ENCODE measurements at regions of chr19 and their contacts with region 1.

Region 1: DNA sequence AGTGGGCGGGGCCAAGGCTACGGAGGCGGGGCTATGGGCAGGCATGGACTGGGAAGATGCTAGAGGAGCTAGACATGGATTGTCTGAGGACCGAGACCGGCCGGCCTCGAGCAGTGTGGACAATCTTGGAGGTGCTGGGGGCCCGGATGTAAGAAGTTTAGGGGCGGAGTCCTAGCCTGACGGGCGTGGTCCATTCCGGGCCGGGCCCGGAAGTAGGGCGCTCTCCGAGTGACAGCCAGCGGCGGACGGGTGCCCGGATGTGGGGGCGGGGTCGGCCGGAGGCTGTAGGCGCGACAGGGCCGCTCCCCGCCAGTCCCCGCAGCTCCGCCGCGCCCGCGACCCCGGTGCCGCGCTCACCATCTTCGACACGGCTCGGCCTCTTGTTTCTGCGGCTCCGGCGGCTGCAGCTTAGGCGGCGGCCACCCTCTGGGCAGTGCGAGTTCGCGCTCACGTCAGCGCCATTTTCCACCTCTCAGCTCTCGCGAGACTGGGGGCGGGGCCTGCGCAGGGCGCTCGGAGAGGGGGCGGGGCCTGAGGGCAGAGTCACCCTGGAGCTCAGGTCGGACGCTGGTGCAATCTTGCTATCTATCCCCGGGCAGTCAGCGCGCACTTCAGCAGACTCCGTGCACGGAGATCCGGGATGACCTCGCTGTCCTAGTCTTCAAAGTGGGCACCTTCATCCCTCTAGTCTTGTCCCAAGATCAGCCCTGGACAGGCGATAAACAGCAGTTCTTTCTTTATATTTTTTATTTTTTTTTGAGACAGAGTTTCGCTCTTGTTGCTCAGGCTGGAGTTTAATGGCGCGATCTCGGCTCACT is at the start of gene ZNF414:
- DNase-seq: peak; percentile 91 to 99 (median 97)
- ATAC-seq: peak; percentile 68
- H3K4me3 ChIP-seq: peak within 1 kb of the TSS; percentile 51
- H3K4me3 Mint-ChIP-seq: peak within 1 kb of the TSS; percentile 91
- H3K27ac ChIP-seq: peak within 1 kb of the TSS; percentile 84 to 97
- H3K27ac Mint-ChIP-seq: peak within 1 kb of the TSS; percentile 100
- H3K4me1 ChIP-seq: peaks cover 68% of the 10 kb centered on the region
- H3K4me1 Mint-ChIP-seq: peaks cover 61% of the 10 kb centered on the region
- H3K27me3 ChIP-seq: no peaks in the 10 kb centered on the region
- H3K27me3 Mint-ChIP-seq: no peaks in the 10 kb centered on the region
- CTCF ChIP-seq: no peak
- total RNA-seq, gene ZNF414: 36.3 to 38.0 TPM

Region 2: DNA sequence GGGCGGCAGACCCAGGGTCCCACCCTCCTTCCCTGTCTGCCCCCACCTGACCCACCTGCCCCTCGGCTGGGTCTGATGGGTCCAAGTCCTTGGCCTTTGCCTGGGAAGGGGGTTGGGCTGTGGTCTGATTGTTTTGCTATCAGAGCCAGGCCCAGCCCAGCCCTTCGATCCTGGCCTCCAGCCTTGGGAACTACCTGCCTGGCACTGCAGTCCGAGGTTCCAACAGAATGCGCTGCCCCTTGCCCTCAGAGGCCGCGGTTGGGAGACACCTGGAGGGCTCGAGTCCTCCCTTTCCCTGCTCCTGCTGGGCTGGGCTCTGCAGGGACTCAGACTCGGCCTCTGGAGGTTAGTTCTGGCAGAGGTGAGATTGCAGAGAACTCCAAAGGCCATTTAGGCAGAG is 459.7 kb before region 1 on chr19:
- CTCF ChIA-PET with region 1: no interaction called
- POLR2A ChIA-PET with region 1: no interaction called
- intact Hi-C with region 1: no loop called
- DNase-seq: no peak
- ATAC-seq: no peak
- H3K4me3 ChIP-seq: no peak overlapping the region
- H3K4me3 Mint-ChIP-seq: no peak overlapping the region
- H3K27ac ChIP-seq: no peak overlapping the region
- H3K27ac Mint-ChIP-seq: no peak overlapping the region
- H3K4me1 ChIP-seq: peaks cover 22% of the 10 kb centered on the region
- H3K4me1 Mint-ChIP-seq: peaks cover 14% of the 10 kb centered on the region
- H3K27me3 ChIP-seq: no peaks in the 10 kb centered on the region
- H3K27me3 Mint-ChIP-seq: no peaks in the 10 kb centered on the region
- CTCF ChIP-seq: no peak

Region 3: DNA sequence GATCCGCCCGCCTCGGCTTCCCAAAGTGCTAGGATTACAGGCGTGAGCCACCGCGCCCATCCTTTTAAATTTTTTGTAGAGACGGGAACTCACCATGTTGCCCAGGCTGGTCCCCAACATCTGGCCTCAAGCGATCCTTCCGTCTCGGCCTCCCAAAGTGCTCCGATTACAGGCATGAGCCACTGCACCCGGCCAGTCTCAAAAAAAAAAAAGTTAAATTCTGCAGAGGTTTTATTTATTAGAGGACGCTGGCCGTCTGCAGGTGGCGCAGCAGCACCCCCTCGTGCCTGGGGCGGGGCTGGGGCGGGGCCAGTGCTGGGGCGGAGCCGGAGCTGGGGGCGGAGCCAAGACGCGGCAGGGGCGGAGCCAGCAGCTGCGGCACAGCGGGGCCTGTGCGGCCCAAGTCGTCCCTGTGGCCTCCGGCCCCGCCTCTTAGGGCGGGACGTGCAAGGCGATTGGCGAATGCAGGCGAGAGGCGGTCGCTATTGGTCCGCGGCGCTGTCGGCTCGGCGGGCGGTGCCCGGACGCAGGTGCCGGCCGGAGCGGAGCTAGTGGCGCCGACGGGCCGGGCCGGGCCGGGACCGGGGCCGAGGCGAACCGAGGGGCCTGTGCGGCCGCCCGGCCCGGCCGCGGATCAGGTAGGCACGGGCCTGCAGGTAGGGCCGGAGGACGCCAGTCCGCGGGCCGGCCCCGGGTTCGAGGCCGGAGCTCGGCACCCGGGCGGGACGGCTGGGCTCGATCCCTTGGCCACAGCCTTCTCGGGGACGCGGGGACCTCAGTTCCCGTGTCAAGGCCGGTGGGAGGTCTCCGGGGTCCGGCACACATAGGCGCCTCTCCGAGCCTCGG is 100.9 kb before region 1 on chr19 and contains the start of gene MARCHF2:
- CTCF ChIA-PET with region 1: interaction called, 4 read pairs
- POLR2A ChIA-PET with region 1: interaction called, 19 read pairs
- intact Hi-C with region 1: loop called in 1 of 2 experiments (anchors 5 kb)
- DNase-seq: peak; percentile 91 to 99 (median 96)
- ATAC-seq: peak; percentile 99
- H3K4me3 ChIP-seq: peak within 1 kb of the TSS; percentile 62
- H3K4me3 Mint-ChIP-seq: peak within 1 kb of the TSS; percentile 81
- H3K27ac ChIP-seq: no peak within 1 kb of the TSS
- H3K27ac Mint-ChIP-seq: no peak within 1 kb of the TSS
- H3K4me1 ChIP-seq: peaks cover 15% of the 10 kb centered on the region
- H3K4me1 Mint-ChIP-seq: peaks cover 13% of the 10 kb centered on the region
- H3K27me3 ChIP-seq: no peaks in the 10 kb centered on the region
- H3K27me3 Mint-ChIP-seq: no peaks in the 10 kb centered on the region
- CTCF ChIP-seq: peak; percentile 75
- total RNA-seq, gene MARCHF2: 20.0 to 22.2 TPM

Region 4: DNA sequence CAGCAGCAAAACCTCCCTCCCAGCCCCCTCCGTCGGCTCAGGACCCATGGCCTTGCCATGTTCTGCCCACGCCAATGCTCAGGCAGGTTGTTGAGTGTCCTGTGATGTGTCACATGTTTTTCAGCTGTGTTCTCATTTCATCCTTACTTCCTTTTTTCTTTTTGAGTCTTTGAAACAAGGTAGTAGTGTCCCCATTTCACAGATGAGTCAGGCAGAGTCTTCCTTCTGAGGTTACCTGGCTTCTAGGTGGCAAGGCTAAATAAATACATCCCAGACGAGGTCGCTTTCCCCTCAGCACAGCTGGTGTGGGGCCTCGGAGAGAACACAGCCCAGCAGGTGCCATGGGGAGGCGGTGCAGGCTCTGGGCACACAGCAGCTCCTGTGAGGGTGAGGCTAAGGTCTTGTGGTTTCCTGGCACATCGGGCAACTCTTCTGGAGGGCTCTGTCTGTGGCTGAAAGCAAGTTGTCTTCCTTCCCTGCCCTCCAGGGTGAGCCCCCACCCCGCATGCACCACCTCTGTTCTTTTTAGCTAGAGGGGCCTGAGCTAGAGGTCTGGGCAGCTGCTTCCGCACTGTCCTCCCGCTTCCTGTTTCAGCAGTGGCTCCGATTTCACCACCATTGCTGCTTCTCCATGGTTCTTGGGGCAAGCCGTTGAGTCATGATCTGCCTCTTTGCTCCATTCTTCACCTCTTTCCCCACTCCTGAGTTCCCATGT is 26.6 kb before region 1 on chr19:
- CTCF ChIA-PET with region 1: interaction called, 9 read pairs
- POLR2A ChIA-PET with region 1: interaction called, 26 read pairs
- intact Hi-C with region 1: no loop called
- DNase-seq: peak; percentile 46 to 81 (median 62)
- ATAC-seq: peak; percentile 89
- H3K4me3 ChIP-seq: no peak overlapping the region
- H3K4me3 Mint-ChIP-seq: peak overlapping the region; percentile 59
- H3K27ac ChIP-seq: peak overlapping the region; percentile 57 to 64
- H3K27ac Mint-ChIP-seq: peak overlapping the region; percentile 85
- H3K4me1 ChIP-seq: peaks cover 38% of the 10 kb centered on the region
- H3K4me1 Mint-ChIP-seq: peaks cover 46% of the 10 kb centered on the region
- H3K27me3 ChIP-seq: no peaks in the 10 kb centered on the region
- H3K27me3 Mint-ChIP-seq: no peaks in the 10 kb centered on the region
- CTCF ChIP-seq: peak; percentile 60

Region 5: DNA sequence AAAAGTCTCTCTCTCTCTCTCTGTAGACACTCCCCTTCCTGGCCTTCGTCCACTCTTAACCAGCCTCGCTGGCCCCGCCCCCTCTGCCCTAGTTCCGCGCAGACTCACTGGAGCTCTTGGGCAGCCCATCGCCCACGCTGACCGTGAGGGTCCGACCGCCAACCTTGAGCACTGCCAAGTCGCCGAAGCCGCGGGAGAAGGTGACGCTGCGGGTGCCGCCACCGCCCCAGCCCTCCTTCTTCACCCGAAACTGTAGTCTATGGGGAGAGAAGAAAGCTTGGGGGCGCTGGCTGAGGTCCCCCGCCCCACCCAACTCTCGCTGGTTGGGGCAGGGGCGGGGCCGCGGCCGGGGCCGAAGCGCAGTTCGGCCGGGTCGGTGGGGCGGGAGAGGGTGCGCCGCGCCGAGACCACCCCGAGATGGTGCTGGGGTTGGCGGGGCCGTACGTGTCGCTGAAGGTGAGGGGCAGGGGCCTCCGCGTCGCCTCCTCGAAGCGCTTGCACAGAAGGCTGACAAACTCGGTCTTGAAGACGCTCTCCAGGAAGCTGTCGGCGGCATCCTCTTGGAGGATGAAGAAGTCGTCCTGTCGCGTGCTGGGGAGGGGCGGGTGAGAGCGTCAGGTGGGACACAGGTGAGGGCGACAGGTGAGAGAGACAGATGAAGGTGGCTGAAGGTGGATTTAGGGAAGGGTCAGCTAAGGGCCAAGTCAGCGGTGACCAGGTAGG is 12.6 kb after region 1 on chr19:
- CTCF ChIA-PET with region 1: no interaction called
- POLR2A ChIA-PET with region 1: interaction called, 10 read pairs
- intact Hi-C with region 1: no loop called
- DNase-seq: peak in 1 of 14 experiments; percentile 39
- ATAC-seq: no peak
- H3K4me3 ChIP-seq: no peak overlapping the region
- H3K4me3 Mint-ChIP-seq: no peak overlapping the region
- H3K27ac ChIP-seq: no peak overlapping the region
- H3K27ac Mint-ChIP-seq: peak overlapping the region; percentile 58
- H3K4me1 ChIP-seq: peaks cover 10% of the 10 kb centered on the region
- H3K4me1 Mint-ChIP-seq: peaks cover 12% of the 10 kb centered on the region
- H3K27me3 ChIP-seq: no peaks in the 10 kb centered on the region
- H3K27me3 Mint-ChIP-seq: no peaks in the 10 kb centered on the region
- CTCF ChIP-seq: no peak